ENCODE measurements at regions of chrX and their contacts with region 1.

Region 1: GRCh38 chrX:153714256-153714655 is 9.9 kb downstream of the BCAP31 start:
- DNase-seq: no peak
- H3K4me3 Mint-ChIP-seq: no peak overlapping the region
- H3K27ac Mint-ChIP-seq: peak overlapping the region; percentile 41
- H3K4me1 Mint-ChIP-seq: no peaks in the 10 kb centered on the region
- H3K27me3 Mint-ChIP-seq: no peaks in the 10 kb centered on the region

Region 2: GRCh38 chrX:153921511-153922446 is 207.5 kb after region 1 on chrX:
- CTCF ChIA-PET with region 1: no interaction called
- POLR2A ChIA-PET with region 1: interaction called, 13 read pairs
- DNase-seq: no peak
- H3K4me3 Mint-ChIP-seq: peak overlapping the region; percentile 90
- H3K27ac Mint-ChIP-seq: peak overlapping the region; percentile 73
- H3K4me1 Mint-ChIP-seq: peaks cover 18% of the 10 kb centered on the region
- H3K27me3 Mint-ChIP-seq: no peaks in the 10 kb centered on the region

Measured in activated CD4-positive, alpha-beta T cell treated with anti-CD3 and anti-CD28 coated beads, Interleukin-2, amount 10 ng/mL, durations not matched to agents 7 days and 5 days (primary cell).